Ovary (tissue), 10 donors: ENCODE measurements at regions of chr6 and their contacts with region 1.

Region 1: GRCh38 chr6:168117942-168118341 is 38.9 kb upstream of the FRMD1 start:
- DNase-seq: peak in 1 of 5 donors; percentile 8
- H3K4me3 ChIP-seq: no peak overlapping the region
- H3K27ac ChIP-seq: no peak overlapping the region
- H3K4me1 ChIP-seq: no peaks in the 10 kb centered on the region
- H3K27me3 ChIP-seq: no peaks in the 10 kb centered on the region
- CTCF ChIP-seq: no peak
- EP300 ChIP-seq: no peak
- POLR2A ChIP-seq: no peak

Region 2: DNA sequence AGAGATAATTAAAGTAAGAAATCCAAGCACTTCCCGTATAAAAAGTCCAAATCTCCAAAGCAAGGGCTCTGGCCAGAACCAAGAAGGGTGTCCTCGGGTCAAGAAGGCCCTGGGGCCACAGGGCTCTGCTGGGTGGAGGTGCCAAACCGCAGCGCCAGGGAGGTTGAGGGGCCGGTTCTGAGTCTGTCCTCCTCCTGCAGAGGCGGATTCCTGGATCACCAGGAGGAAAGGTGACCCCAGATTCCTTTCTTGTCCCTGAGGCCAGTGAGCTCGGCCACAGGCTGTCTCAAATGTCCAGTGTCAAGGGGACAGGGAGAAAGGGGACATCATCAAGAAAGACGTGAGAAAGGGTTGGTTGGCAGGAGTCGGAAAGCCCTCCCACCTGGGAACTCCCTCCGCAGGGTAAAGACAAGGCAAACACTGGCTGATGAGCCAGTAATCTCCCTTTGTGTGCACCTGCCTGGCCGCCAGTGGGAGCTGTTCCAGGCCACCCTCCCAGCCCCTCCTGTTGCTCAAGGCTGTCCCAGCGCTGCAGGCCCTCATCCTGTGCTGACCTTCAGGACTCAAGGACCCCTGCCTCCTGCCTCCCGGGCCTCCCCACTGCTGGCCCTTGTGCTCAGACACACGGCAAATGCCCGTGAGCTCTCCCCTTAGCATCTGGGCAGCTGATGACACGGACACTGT is 46.5 kb before region 1 on chr6:
- intact Hi-C with region 1: loop called in 1 of 4 experiments (anchors 2 kb)
- DNase-seq: no peak
- H3K4me3 ChIP-seq: no peak overlapping the region
- H3K27ac ChIP-seq: no peak overlapping the region
- H3K4me1 ChIP-seq: no peaks in the 10 kb centered on the region
- H3K27me3 ChIP-seq: no peaks in the 10 kb centered on the region
- CTCF ChIP-seq: no peak
- EP300 ChIP-seq: no peak
- POLR2A ChIP-seq: no peak

Region 3: GRCh38 chr6:168157272-168158007 is 39.5 kb after region 1 on chr6:
- intact Hi-C with region 1: no loop called
- DNase-seq: no peak
- H3K4me3 ChIP-seq: no peak overlapping the region
- H3K27ac ChIP-seq: no peak overlapping the region
- H3K4me1 ChIP-seq: peaks cover 2% of the 10 kb centered on the region
- H3K27me3 ChIP-seq: no peaks in the 10 kb centered on the region
- CTCF ChIP-seq: no peak
- EP300 ChIP-seq: no peak
- POLR2A ChIP-seq: no peak

Region 4: GRCh38 chr6:168305096-168305749 is 187.3 kb after region 1 on chr6:
- intact Hi-C with region 1: loop called in 1 of 4 experiments (anchors 5 kb)
- DNase-seq: no peak
- H3K4me3 ChIP-seq: no peak overlapping the region
- H3K27ac ChIP-seq: no peak overlapping the region
- H3K4me1 ChIP-seq: no peaks in the 10 kb centered on the region
- H3K27me3 ChIP-seq: no peaks in the 10 kb centered on the region
- CTCF ChIP-seq: no peak
- EP300 ChIP-seq: no peak
- POLR2A ChIP-seq: no peak

Region 5: GRCh38 chr6:168367285-168367751 is 249.4 kb after region 1 on chr6:
- intact Hi-C with region 1: no loop called
- DNase-seq: peak in 3 of 5 donors; percentile 43 to 50 (median 47)
- H3K4me3 ChIP-seq: no peak overlapping the region
- H3K27ac ChIP-seq: no peak overlapping the region
- H3K4me1 ChIP-seq: peaks cover 3% of the 10 kb centered on the region
- H3K27me3 ChIP-seq: no peaks in the 10 kb centered on the region
- CTCF ChIP-seq: no peak
- EP300 ChIP-seq: no peak
- POLR2A ChIP-seq: no peak

Region 6: DNA sequence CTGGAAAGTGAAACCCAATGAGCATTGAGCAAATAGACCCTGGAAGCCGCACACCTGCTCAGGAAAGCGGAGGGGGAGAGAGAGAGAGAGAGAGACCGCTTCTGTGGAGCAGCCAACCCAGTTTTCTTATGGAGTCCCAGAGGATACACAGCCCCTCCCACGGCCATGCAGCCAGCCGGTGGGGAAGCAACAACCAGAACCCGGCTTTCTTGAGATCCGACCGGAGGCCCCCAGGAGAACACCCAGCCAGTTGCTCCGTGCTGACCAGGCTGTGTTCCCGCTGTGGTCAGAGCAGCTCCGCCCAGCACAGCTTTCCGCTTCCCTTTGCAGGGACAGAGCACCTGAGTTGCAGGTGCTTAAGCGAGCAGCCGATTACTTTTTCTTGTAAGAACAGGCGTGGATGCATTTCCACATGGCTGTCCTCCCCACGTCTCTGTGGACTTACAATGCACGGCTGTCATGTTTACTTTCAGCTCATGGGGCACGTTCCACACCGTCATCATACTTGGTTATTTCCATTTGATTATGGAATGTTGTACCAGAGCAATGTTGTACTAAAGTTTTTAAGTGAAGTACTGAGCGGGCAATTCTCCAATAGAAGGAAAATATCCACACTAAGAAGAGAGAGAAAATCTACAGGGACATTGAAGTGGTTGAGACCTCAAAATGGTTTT is 753.8 kb after region 1 on chr6:
- intact Hi-C with region 1: no loop called
- DNase-seq: no peak
- H3K4me3 ChIP-seq: no peak overlapping the region
- H3K27ac ChIP-seq: no peak overlapping the region
- H3K4me1 ChIP-seq: no peaks in the 10 kb centered on the region
- H3K27me3 ChIP-seq: no peaks in the 10 kb centered on the region
- CTCF ChIP-seq: no peak
- EP300 ChIP-seq: no peak
- POLR2A ChIP-seq: no peak